IMR-90 (cell line): ENCODE measurements at regions of chr5 and their contacts with region 1.

Region 1: GRCh38 chr5:15440434-15440833 is 59.5 kb upstream of the FBXL7 start:
- DNase-seq: no peak
- ATAC-seq: no peak
- H3K4me3 ChIP-seq: no peak overlapping the region
- H3K27ac ChIP-seq: no peak overlapping the region
- H3K4me1 ChIP-seq: no peaks in the 10 kb centered on the region
- H3K27me3 ChIP-seq: peaks cover 4% of the 10 kb centered on the region
- CTCF ChIP-seq: no peak
- POLR2A ChIP-seq: no peak
- RAD21 ChIP-seq: no peak

Region 2: DNA sequence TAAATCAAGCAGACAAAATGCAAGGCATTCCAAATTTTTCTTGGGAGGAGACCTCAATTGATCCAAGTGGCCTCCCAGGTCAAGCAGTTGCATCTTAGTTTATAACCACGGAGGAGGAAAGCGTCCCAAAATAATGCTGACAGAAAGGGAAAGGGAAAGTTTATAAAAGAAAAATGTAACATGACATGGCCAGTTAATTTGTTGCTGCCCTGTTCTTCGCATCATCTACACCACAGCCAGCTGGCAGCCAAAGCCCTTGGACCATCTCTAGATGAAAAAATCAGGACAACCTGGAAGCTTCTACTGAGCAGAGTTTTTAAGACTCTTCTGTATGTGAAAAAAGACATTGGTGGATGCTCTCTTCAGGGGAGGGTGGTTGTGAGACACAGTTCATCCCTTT is 69.2 kb before region 1 on chr5:
- CTCF ChIA-PET with region 1: no interaction called
- POLR2A ChIA-PET with region 1: interaction called, 15 read pairs
- dilution Hi-C with region 1: no loop called
- in situ Hi-C with region 1: no loop called
- intact Hi-C with region 1: no loop called
- DNase-seq: no peak
- ATAC-seq: no peak
- H3K4me3 ChIP-seq: no peak overlapping the region
- H3K27ac ChIP-seq: no peak overlapping the region
- H3K4me1 ChIP-seq: no peaks in the 10 kb centered on the region
- H3K27me3 ChIP-seq: no peaks in the 10 kb centered on the region; the same call in 1 of the 2 replicates
- CTCF ChIP-seq: no peak
- POLR2A ChIP-seq: no peak
- RAD21 ChIP-seq: no peak